Endothelial cell of umbilical vein (primary cell): ENCODE measurements at regions of chr20 and their contacts with region 1.

Region 1: GRCh38 chr20:43408848-43409576 is 48.7 kb upstream of the SRSF6 start:
- DNase-seq: peak; percentile 38
- H3K4me3 ChIP-seq: no peak overlapping the region
- H3K27ac ChIP-seq: no peak overlapping the region
- H3K4me1 ChIP-seq: no peaks in the 10 kb centered on the region
- H3K27me3 ChIP-seq: no peaks in the 10 kb centered on the region
- CTCF ChIP-seq: peak; percentile 52 to 56
- POLR2A ChIP-seq: no peak

Region 2: DNA sequence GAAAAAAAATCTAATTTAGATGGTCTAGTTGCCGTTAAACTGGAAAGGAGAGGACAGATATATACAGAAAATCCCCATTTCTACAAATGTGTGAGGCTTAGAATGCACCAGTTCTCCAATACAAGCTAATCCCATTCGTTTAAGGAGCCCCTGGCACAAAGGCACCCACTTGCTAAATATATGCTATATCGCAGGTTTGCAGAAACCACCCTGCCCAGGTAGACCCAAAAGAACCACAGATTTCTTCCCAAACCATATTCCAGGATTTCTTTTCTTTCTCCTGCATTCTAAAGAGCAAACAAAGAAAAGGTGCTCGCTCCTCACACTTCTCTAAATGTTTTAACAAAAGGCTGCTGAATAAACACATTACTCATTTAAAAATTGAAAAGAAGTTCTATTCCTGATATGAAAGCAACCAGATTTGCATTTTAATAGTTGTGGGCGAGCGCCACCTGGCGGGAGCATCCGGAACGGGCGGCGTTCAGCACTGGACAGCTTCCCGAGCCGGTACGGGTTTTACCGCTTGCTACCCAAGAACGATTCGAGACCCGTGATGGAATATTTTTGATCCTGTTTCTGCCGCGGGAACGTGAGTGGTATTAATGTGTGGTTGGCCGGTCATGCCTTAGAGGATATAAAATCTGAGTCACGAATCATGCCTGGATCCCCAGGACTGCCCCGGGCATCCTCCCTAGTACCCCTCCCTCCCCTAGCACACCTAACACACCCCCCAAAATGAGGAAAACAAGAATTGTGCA is 221.4 kb before region 1 on chr20:
- CTCF ChIA-PET with region 1: interaction called, 3 read pairs
- POLR2A ChIA-PET with region 1: no interaction called
- dilution Hi-C with region 1: no loop called
- intact Hi-C with region 1: loop called (anchors 10 kb)
- DNase-seq: peak; percentile 58
- H3K4me3 ChIP-seq: no peak overlapping the region
- H3K27ac ChIP-seq: no peak overlapping the region
- H3K4me1 ChIP-seq: no peaks in the 10 kb centered on the region
- H3K27me3 ChIP-seq: peaks cover 11 to 15% of the 10 kb centered on the region in 2 experiments
- CTCF ChIP-seq: peak; percentile 83 to 87
- POLR2A ChIP-seq: no peak

Region 3: GRCh38 chr20:43397147-43397546 is 11.9 kb before region 1 on chr20:
- CTCF ChIA-PET with region 1: interaction called, 17 read pairs
- POLR2A ChIA-PET with region 1: no interaction called
- dilution Hi-C with region 1: no loop called
- intact Hi-C with region 1: no loop called
- DNase-seq: no peak
- H3K4me3 ChIP-seq: no peak overlapping the region
- H3K27ac ChIP-seq: no peak overlapping the region
- H3K4me1 ChIP-seq: no peaks in the 10 kb centered on the region
- H3K27me3 ChIP-seq: no peaks in the 10 kb centered on the region
- CTCF ChIP-seq: no peak
- POLR2A ChIP-seq: no peak

Region 4: GRCh38 chr20:43658069-43658722 is 249.2 kb after region 1 on chr20:
- CTCF ChIA-PET with region 1: no interaction called
- POLR2A ChIA-PET with region 1: no interaction called
- dilution Hi-C with region 1: no loop called
- intact Hi-C with region 1: no loop called
- DNase-seq: no peak
- H3K4me3 ChIP-seq: peak overlapping the region in 2 of 3 experiments; percentile 64 to 72
- H3K27ac ChIP-seq: peak overlapping the region; percentile 22
- H3K4me1 ChIP-seq: peaks cover 4% of the 10 kb centered on the region
- H3K27me3 ChIP-seq: peaks cover 0 to 4% of the 10 kb centered on the region in 2 experiments
- CTCF ChIP-seq: no peak
- POLR2A ChIP-seq: no peak